GM23248 (cell line): ENCODE measurements at regions of chr2 and their contacts with region 1.

Region 1: GRCh38 chr2:15636972-15637785 is 45.5 kb downstream of the DDX1 start:
- DNase-seq: peak; percentile 79
- H3K4me3 ChIP-seq: no peak overlapping the region
- H3K27ac ChIP-seq: no peak overlapping the region
- H3K4me1 ChIP-seq: peaks cover 40% of the 10 kb centered on the region
- H3K27me3 ChIP-seq: no peaks in the 10 kb centered on the region

Region 2: DNA sequence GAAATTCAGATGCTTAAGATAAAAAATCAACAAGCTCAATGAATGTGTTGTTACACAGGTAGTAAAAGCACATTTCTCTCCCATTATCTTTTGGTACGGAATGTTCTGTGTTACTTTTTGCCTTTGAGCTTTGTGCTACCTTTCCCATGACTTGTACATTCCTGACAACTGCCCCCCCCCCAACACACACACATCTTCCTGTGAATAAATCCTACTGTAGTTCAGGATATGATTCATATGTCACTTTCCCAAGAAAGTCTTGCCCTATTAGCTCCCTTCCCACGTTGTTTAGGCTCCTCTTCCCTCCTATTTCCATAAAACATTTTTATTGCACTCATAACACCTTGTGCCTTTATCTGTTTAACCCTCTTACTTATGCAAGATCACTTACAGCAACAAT is 1447.2 kb before region 1 on chr2:
- in situ Hi-C with region 1: no loop called
- DNase-seq: no peak
- H3K4me3 ChIP-seq: no peak overlapping the region
- H3K27ac ChIP-seq: no peak overlapping the region
- H3K4me1 ChIP-seq: no peaks in the 10 kb centered on the region
- H3K27me3 ChIP-seq: no peaks in the 10 kb centered on the region

Region 3: GRCh38 chr2:15383746-15384350 is 253.3 kb before region 1 on chr2:
- in situ Hi-C with region 1: no loop called
- DNase-seq: no peak
- H3K4me3 ChIP-seq: no peak overlapping the region
- H3K27ac ChIP-seq: no peak overlapping the region
- H3K4me1 ChIP-seq: no peaks in the 10 kb centered on the region
- H3K27me3 ChIP-seq: no peaks in the 10 kb centered on the region

Region 4: DNA sequence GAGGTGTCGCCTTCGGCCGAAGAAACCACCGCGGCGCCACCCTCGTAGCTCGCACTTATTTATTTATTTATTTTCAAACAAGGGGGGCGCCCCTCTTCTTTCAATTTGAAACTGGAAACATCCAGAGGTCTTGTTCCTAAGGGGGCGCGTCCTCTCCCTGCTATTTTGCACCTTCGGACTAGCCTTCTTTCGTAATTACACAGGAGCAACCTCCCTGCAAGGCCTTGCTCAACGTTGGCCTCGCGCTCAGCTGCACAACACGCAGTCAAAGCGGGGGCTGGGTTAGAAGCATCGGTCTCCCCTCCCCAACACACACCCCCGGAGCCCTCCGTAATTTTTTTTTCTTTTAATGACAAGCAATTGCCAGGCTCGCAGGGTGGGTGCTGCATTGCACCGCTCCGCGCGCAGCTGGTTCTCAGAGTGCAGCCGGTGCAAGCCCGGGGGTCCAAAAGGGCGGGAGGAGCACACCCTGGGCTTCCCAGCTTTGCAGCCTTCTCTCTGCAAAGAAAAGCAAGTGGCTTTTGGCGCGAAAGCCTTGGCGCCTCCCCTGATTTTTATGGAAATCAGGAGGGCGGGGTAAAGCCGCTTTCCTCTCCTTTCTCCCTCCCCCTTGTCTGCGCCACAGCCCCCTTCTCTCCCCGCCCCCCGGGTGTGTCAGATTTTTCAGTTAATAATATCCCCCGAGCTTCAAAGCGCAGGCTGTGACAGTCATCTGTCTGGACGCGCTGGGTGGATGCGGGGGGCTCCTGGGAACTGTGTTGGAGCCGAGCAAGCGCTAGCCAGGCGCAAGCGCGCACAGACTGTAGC is 302.9 kb after region 1 on chr2 and contains the start of gene MYCN:
- in situ Hi-C with region 1: loop called (anchors 10 kb)
- DNase-seq: no peak
- H3K4me3 ChIP-seq: peak within 1 kb of the TSS; percentile 54
- H3K27ac ChIP-seq: no peak within 1 kb of the TSS
- H3K4me1 ChIP-seq: 0 out of 2 replicates have a peak, but pooled peaks cover 4% of the 10 kb centered on the region
- H3K27me3 ChIP-seq: peaks cover 55% of the 10 kb centered on the region
- total RNA-seq, gene MYCN: not detected in 2 replicates

Region 5: GRCh38 chr2:16487686-16488085 is 850.5 kb after region 1 on chr2:
- in situ Hi-C with region 1: loop called (anchors 25 kb)
- DNase-seq: peak; percentile 64
- H3K4me3 ChIP-seq: no peak overlapping the region
- H3K27ac ChIP-seq: no peak overlapping the region
- H3K4me1 ChIP-seq: no peaks in the 10 kb centered on the region
- H3K27me3 ChIP-seq: no peaks in the 10 kb centered on the region

Region 6: DNA sequence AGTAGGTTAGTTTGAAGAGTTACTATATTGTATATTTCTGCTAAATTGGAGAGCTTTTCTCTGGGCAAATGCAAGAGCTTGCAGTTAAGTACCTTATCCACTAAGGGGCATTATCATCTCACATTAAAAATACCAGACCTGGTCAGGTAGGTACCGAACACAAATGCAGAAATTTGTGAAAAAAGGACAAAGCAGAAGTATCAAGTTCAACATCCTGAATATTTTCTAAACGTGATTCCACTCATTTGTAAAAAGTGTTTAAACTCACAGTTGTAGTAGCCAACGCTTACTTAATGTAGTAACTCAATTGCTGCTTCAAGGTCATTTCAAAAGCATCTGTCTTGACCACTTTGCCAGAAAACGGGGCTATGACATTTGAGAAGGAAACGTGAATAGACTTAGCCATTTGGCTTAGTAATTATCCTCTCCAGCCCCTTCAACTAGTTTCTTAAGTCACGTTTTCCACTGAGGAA is 976.4 kb after region 1 on chr2:
- in situ Hi-C with region 1: loop called (anchors 10 kb)
- DNase-seq: peak; percentile 23
- H3K4me3 ChIP-seq: no peak overlapping the region
- H3K27ac ChIP-seq: no peak overlapping the region
- H3K4me1 ChIP-seq: no peaks in the 10 kb centered on the region
- H3K27me3 ChIP-seq: peaks cover 14% of the 10 kb centered on the region

Region 7: GRCh38 chr2:16756831-16757644 is 1119.9 kb after region 1 on chr2:
- in situ Hi-C with region 1: loop called (anchors 25 kb)
- DNase-seq: peak; percentile 70
- H3K4me3 ChIP-seq: no peak overlapping the region
- H3K27ac ChIP-seq: no peak overlapping the region
- H3K4me1 ChIP-seq: no peaks in the 10 kb centered on the region
- H3K27me3 ChIP-seq: peaks cover 2% of the 10 kb centered on the region; the same call in 1 of the 2 replicates